ENCODE measurements at regions of chr7 and their contacts with region 1.

Region 1: DNA sequence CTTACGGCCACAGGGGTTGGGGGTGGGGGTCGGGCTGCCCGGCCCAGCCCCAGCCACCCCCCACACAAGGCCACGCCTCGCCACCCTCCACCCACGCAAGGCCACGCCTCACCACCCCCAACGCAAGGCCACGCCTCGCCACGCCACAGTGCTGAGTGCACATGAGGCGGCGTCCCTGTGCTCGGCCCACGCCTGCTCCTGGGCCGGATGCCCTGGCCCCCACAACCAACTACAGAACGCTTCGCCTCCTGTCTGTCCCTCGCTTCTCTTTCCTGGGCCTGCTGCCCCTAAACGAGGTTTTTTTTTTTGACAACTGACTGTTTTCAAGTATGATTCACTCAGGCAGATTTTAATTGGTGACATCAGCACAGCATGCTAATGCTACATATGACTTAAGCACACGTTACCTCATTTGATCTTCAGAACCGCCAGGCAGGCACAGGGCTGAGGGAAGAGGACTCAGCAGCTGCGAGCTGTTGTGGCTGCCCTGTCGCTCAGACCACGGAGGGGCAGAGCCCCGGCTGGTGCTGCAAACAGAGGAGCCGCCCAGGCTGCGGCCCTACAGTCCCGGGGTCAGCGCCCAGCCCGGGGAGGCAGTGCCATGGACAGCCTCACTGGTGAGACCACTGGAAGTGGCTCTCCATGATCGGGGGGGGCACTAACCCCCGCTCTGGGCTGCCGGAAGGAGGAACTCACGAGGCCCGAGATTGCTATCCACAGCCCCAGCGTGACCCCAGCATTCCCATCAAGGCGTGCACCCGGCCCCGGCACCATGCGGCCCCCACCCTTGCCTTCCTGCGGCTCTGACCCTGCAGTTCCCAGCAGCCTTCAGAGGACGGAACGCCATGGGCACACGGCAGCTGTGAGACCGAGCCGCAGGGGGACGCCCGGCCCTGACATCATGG is 212.9 kb downstream of the MAD1L1 start:
- DNase-seq: peak; percentile 87 to 97 (median 94)
- ATAC-seq: peak; percentile 86
- H3K4me3 ChIP-seq: no peak overlapping the region
- H3K27ac ChIP-seq: peak overlapping the region; percentile 97
- H3K4me1 ChIP-seq: peaks cover 51 to 62% of the 10 kb centered on the region in 2 experiments
- H3K27me3 ChIP-seq: no peaks in the 10 kb centered on the region
- CTCF ChIP-seq: no peak
- EP300 ChIP-seq: peak; percentile 23; the same call in 1 of the 2 replicates
- POLR2A ChIP-seq: peak; percentile 75
- RAD21 ChIP-seq: no peak; a peak in 1 of 4 replicates

Region 2: GRCh38 chr7:1439373-1440363 is 580.2 kb before region 1 on chr7:
- CTCF ChIA-PET with region 1: no interaction called
- POLR2A ChIA-PET with region 1: no interaction called
- in situ Hi-C with region 1: no loop called
- intact Hi-C with region 1: no loop called
- DNase-seq: peak in 1 of 4 experiments; percentile 35
- ATAC-seq: peak; percentile 72
- H3K4me3 ChIP-seq: no peak overlapping the region
- H3K27ac ChIP-seq: no peak overlapping the region
- H3K4me1 ChIP-seq: peaks cover 0 to 53% of the 10 kb centered on the region in 2 experiments; a peak in 2 of 5 replicates
- H3K27me3 ChIP-seq: no peaks in the 10 kb centered on the region
- CTCF ChIP-seq: peak in 2 of 3 experiments; percentile 25 to 36; a peak in 4 of 6 replicates
- EP300 ChIP-seq: no peak
- POLR2A ChIP-seq: no peak
- RAD21 ChIP-seq: peak in 1 of 2 experiments; percentile 58; a peak in 3 of 4 replicates

Region 3: GRCh38 chr7:2037808-2038522 is 18.1 kb after region 1 on chr7:
- CTCF ChIA-PET with region 1: no interaction called
- POLR2A ChIA-PET with region 1: interaction called, 5 read pairs
- in situ Hi-C with region 1: no loop called
- intact Hi-C with region 1: loop called (anchors 2 kb)
- DNase-seq: peak in 1 of 4 experiments; percentile 49
- ATAC-seq: peak; percentile 67
- H3K4me3 ChIP-seq: no peak overlapping the region
- H3K27ac ChIP-seq: peak overlapping the region; percentile 70
- H3K4me1 ChIP-seq: peaks cover 15 to 33% of the 10 kb centered on the region in 2 experiments; a peak in 4 of 5 replicates
- H3K27me3 ChIP-seq: no peaks in the 10 kb centered on the region
- CTCF ChIP-seq: no peak
- EP300 ChIP-seq: no peak
- POLR2A ChIP-seq: no peak
- RAD21 ChIP-seq: no peak

Region 4: DNA sequence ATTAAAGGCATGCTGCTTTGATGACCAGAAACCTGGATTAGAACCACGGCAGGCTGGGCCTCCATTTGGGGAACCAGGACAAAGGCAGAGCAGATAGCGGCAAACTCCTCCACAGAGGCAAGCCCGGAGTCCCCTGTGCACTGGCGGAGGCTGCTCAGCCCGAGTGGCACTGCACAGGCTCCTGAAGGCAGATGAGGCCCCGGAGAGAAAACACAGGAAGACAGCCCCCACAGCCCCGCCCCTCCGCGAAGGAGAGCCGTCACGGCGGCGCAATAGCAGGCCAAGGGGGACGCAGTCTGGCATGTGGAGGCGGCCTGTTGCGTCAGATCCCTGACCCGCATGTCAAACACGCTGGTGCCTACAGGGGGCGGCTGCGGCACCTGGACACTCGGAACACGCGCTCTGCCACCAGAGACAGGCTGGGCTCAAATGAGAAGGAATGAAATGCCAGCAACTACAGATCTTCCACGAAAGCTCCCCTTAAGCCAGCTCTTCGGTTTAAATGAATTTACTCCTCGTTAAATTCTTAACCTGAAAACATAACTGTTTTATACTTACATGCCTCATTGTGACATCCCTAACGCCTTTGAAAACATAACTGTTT is 84.3 kb after region 1 on chr7:
- CTCF ChIA-PET with region 1: no interaction called
- POLR2A ChIA-PET with region 1: no interaction called
- in situ Hi-C with region 1: no loop called
- intact Hi-C with region 1: loop called (anchors 2 kb)
- DNase-seq: peak; percentile 95 to 97 (median 96)
- ATAC-seq: peak; percentile 89
- H3K4me3 ChIP-seq: no peak overlapping the region
- H3K27ac ChIP-seq: peak overlapping the region; percentile 82
- H3K4me1 ChIP-seq: peaks cover 48 to 78% of the 10 kb centered on the region in 2 experiments
- H3K27me3 ChIP-seq: no peaks in the 10 kb centered on the region; a peak in 1 of 5 replicates
- CTCF ChIP-seq: peak; percentile 84 to 93 (median 88)
- EP300 ChIP-seq: peak; percentile 69
- POLR2A ChIP-seq: peak; percentile 65
- RAD21 ChIP-seq: peak; percentile 76 to 78

Region 5: DNA sequence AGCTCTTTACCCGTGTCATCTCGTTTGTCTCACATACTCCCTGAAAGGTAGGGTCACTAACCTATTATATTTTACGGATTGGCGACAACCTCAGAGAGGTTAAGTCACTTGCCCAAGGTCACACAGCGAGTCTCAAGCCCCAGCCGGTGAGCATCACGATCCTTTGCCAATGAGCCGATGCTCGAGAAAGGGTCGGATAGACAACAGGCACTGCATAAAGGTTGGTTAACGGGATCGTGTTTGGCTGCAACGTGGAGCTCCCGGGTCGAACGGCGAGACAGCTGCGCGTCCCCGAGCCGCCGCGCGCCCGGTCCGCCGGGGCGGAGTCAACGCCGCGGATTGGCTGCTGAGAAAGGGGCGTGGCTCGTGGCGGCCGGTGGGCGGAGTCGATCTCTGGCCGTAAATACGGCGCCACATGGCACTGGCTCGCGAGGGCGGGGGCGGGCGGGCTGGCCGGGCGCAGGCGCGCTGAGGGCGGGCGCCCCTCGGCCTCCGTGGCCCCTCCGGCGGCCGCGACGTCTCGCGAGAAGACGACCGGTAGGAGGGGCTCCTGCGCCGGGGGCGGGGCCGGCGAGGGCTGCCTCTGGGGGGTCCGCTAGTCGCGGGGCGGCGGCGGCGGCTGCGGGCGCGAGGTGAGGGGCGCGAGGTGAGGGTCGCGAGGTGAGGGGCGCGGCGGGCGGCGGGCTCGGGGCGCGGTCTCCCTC is 383.3 kb after region 1 on chr7 and contains the start of gene CHST12:
- CTCF ChIA-PET with region 1: no interaction called
- POLR2A ChIA-PET with region 1: no interaction called
- in situ Hi-C with region 1: no loop called
- intact Hi-C with region 1: loop called (anchors 5 kb)
- DNase-seq: peak; percentile 97 to 99 (median 99)
- ATAC-seq: peak; percentile 61
- H3K4me3 ChIP-seq: peak within 1 kb of the TSS; percentile 80
- H3K27ac ChIP-seq: peak within 1 kb of the TSS; percentile 74
- H3K4me1 ChIP-seq: peaks cover 53 to 55% of the 10 kb centered on the region in 2 experiments
- H3K27me3 ChIP-seq: no peaks in the 10 kb centered on the region
- CTCF ChIP-seq: no peak
- EP300 ChIP-seq: no peak
- POLR2A ChIP-seq: peak; percentile 82
- RAD21 ChIP-seq: no peak
- polyA plus RNA-seq, gene CHST12: 0.18 to 0.24 TPM

Measured in K562 (cell line).